Caco-2 (cell line): ENCODE measurements at regions of chr18 and their contacts with region 1.

Region 1: DNA sequence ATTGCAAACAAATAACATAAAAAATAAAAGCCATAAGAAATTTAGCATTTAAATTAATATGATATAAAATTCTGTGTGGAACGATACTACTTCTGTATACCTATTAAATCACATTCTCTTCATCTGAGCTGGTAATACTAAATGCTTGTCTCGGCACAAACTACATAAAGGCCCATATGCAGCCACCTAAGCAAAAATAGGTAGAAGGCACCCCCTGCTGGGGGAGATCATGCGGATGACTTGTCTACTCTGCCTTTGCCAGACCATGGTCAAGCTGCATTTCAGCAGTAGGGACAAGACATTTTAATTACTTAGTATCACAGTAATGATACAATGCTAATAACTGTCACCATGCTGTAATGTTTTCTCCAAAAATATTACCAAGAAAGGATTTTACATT is 108.0 kb downstream of the CDH19 start:
- DNase-seq: peak; percentile 42 to 68
- H3K4me3 ChIP-seq: no peak overlapping the region
- H3K4me3 Mint-ChIP-seq: no peak overlapping the region
- H3K27ac Mint-ChIP-seq: no peak overlapping the region
- H3K4me1 ChIP-seq: no peaks in the 10 kb centered on the region
- H3K4me1 Mint-ChIP-seq: no peaks in the 10 kb centered on the region
- H3K27me3 ChIP-seq: no peaks in the 10 kb centered on the region
- H3K27me3 Mint-ChIP-seq: no peaks in the 10 kb centered on the region
- CTCF ChIP-seq: peak; percentile 32 to 50

Region 2: DNA sequence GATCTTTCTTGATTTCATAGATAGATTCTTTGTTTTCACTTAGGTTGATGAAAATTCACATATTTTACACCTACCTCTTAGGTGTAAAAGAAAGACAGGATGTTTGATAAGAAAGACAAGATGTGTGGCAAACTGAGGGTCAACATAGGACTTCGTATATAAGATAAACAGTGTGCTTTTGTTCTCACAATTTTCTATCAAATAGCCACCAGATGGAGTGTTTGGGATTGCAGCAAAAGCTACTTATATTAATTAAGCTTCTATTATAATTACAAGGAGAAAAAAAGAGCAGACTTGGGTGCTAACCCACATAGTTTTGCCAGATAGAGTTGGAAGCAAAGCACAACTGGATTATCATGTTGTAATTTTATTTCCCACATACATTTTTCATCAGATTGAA is 512.1 kb before region 1 on chr18:
- CTCF ChIA-PET with region 1: no interaction called
- POLR2A ChIA-PET with region 1: no interaction called
- intact Hi-C with region 1: loop called (anchors 1 kb)
- DNase-seq: no peak
- H3K4me3 ChIP-seq: no peak overlapping the region
- H3K4me3 Mint-ChIP-seq: no peak overlapping the region
- H3K27ac Mint-ChIP-seq: no peak overlapping the region
- H3K4me1 ChIP-seq: no peaks in the 10 kb centered on the region
- H3K4me1 Mint-ChIP-seq: no peaks in the 10 kb centered on the region
- H3K27me3 ChIP-seq: no peaks in the 10 kb centered on the region
- H3K27me3 Mint-ChIP-seq: no peaks in the 10 kb centered on the region
- CTCF ChIP-seq: no peak

Region 3: DNA sequence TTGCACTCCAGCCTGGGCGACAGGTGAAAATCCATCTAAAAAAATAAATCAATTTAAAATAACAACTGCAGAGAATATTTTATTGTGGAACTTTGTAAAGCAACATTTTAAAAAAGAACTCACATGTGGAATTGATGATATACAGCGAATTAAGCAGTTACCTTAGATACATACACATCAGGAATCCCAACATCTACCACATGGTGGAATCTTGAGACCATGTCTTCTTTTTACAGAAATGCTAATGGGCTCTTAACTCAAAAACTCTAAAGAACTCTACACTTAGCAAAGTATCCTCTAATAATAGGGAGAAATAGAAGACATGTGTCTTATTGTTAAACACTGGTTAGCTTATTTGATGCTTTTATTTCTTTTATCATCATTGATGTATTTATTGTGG is 371.4 kb before region 1 on chr18:
- CTCF ChIA-PET with region 1: no interaction called
- POLR2A ChIA-PET with region 1: no interaction called
- intact Hi-C with region 1: loop called (anchors 10 kb)
- DNase-seq: no peak
- H3K4me3 ChIP-seq: no peak overlapping the region
- H3K4me3 Mint-ChIP-seq: no peak overlapping the region
- H3K27ac Mint-ChIP-seq: no peak overlapping the region
- H3K4me1 ChIP-seq: no peaks in the 10 kb centered on the region
- H3K4me1 Mint-ChIP-seq: no peaks in the 10 kb centered on the region
- H3K27me3 ChIP-seq: no peaks in the 10 kb centered on the region
- H3K27me3 Mint-ChIP-seq: no peaks in the 10 kb centered on the region
- CTCF ChIP-seq: no peak

Region 4: DNA sequence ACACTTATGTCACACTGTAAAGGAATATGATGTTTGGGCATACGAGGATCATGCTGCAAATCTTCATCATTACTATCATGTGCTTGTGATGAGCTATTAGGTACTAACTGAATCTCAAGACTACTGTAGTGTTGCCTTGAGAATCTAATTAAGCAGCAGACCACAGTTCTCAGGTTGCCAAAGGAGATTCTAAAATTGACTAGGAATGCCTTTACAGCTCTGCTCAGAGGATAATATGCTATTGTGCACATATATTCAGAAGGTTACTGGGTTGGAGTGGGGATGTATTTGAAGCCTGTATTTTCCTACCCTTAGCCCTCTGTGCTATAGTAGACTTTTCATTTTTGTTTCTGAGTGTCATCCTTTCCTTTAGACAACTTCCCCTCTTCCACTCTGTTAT is 67.0 kb before region 1 on chr18:
- CTCF ChIA-PET with region 1: no interaction called
- POLR2A ChIA-PET with region 1: no interaction called
- intact Hi-C with region 1: no loop called
- DNase-seq: no peak
- H3K4me3 ChIP-seq: no peak overlapping the region
- H3K4me3 Mint-ChIP-seq: no peak overlapping the region
- H3K27ac Mint-ChIP-seq: no peak overlapping the region
- H3K4me1 ChIP-seq: no peaks in the 10 kb centered on the region
- H3K4me1 Mint-ChIP-seq: no peaks in the 10 kb centered on the region
- H3K27me3 ChIP-seq: no peaks in the 10 kb centered on the region
- H3K27me3 Mint-ChIP-seq: no peaks in the 10 kb centered on the region
- CTCF ChIP-seq: no peak